ENCODE measurements at regions of chr1 and their contacts with region 1.

Region 1: GRCh38 chr1:156838981-156839410 is 19.9 kb downstream of the INSRR start:
- DNase-seq: peak in 8 of 9 experiments; percentile 33 to 72 (median 54)
- ATAC-seq: peak; percentile 88
- H3K4me3 ChIP-seq: no peak overlapping the region
- H3K4me3 Mint-ChIP-seq: no peak overlapping the region
- H3K27ac ChIP-seq: no peak overlapping the region
- H3K27ac Mint-ChIP-seq: no peak overlapping the region
- H3K4me1 ChIP-seq: no peaks in the 10 kb centered on the region
- H3K4me1 Mint-ChIP-seq: peaks cover 2% of the 10 kb centered on the region
- H3K27me3 ChIP-seq: peaks cover 0 to 7% of the 10 kb centered on the region in 2 experiments
- H3K27me3 Mint-ChIP-seq: peaks cover 46% of the 10 kb centered on the region
- CTCF ChIP-seq: peak; percentile 88

Region 2: GRCh38 chr1:156797212-156797871 is 41.7 kb before region 1 on chr1:
- CTCF ChIA-PET with region 1: interaction called, 29 read pairs
- POLR2A ChIA-PET with region 1: interaction called, 4 read pairs
- intact Hi-C with region 1: loop called (anchors 1 to 5 kb)
- DNase-seq: peak in 7 of 9 experiments; percentile 48 to 84 (median 68)
- ATAC-seq: peak; percentile 91
- H3K4me3 ChIP-seq: no peak overlapping the region
- H3K4me3 Mint-ChIP-seq: no peak overlapping the region
- H3K27ac ChIP-seq: no peak overlapping the region
- H3K27ac Mint-ChIP-seq: no peak overlapping the region
- H3K4me1 ChIP-seq: no peaks in the 10 kb centered on the region
- H3K4me1 Mint-ChIP-seq: peaks cover 8% of the 10 kb centered on the region
- H3K27me3 ChIP-seq: no peaks in the 10 kb centered on the region
- H3K27me3 Mint-ChIP-seq: no peaks in the 10 kb centered on the region
- CTCF ChIP-seq: peak; percentile 87

Region 3: DNA sequence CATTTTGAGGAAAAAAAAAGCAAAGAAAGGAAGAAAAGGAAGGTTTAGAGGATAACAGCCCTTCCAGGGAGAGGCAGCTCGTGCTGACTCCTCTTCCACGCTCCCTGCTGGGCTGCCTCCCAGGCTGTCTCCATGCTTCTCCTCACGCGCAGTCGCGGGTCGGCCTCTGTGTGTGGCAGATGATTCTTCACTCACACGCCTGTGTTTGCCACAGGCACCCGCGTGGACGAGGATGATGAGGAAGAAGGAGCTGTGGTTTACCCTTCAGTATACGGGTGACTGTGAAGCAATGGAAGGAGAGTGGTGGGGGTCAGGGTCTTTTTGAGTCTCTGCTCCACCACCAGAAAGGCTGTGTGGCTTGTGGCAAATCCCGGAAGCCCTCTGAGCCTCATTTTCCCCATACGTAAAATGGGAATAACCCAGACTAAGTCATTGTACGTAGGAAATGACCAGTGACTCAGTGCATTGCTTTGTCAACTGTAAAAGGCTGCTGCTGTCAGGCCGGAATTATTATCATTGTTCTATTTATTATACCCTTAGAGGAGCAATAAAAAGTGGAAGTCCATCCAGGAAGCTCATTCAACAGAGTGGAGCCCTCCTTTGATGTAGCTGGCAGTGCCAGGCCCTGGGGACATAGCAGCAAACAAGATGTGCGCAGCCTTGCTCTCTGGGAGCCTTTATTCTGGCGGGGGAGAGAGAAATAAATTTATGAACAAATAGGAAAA is 10.4 kb before region 1 on chr1:
- CTCF ChIA-PET with region 1: interaction called, 28 read pairs
- POLR2A ChIA-PET with region 1: no interaction called
- intact Hi-C with region 1: no loop called
- DNase-seq: no peak
- ATAC-seq: no peak
- H3K4me3 ChIP-seq: no peak overlapping the region
- H3K4me3 Mint-ChIP-seq: no peak overlapping the region
- H3K27ac ChIP-seq: no peak overlapping the region
- H3K27ac Mint-ChIP-seq: no peak overlapping the region
- H3K4me1 ChIP-seq: no peaks in the 10 kb centered on the region
- H3K4me1 Mint-ChIP-seq: peaks cover under 1% of the 10 kb centered on the region
- H3K27me3 ChIP-seq: no peaks in the 10 kb centered on the region
- H3K27me3 Mint-ChIP-seq: no peaks in the 10 kb centered on the region
- CTCF ChIP-seq: no peak

Region 4: DNA sequence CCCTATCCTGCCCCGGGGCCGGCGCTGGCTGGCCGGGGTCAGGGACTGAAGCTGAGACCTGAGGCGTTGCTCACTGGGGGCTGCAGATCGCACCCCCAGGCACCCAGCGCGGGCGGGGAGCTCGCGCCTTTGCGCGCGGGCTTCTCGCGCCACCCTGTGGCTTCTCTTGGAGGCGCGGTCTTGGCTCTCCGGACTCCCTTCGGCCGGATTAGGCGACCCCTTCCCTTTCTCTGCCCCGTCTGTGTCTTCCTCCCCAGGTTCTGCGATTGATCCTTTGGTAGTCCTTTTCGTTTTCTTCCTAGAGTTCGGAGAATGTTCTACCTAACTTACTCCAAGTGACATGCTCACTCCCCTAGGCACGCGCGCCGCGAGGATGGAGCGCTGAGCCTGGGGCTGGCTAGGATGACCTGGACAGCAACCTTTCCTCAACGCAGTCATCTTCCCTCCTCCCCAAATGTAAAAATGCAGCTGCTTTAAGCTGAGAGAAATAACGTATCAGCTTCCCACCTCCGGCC is 21.2 kb after region 1 on chr1:
- CTCF ChIA-PET with region 1: interaction called, 227 read pairs
- POLR2A ChIA-PET with region 1: interaction called, 16 read pairs
- intact Hi-C with region 1: loop called (anchors 1 kb)
- DNase-seq: peak in 8 of 9 experiments; percentile 47 to 78 (median 63)
- ATAC-seq: peak; percentile 70
- H3K4me3 ChIP-seq: peak overlapping the region; percentile 54 to 73
- H3K4me3 Mint-ChIP-seq: peak overlapping the region; percentile 77
- H3K27ac ChIP-seq: no peak overlapping the region
- H3K27ac Mint-ChIP-seq: peak overlapping the region; percentile 14
- H3K4me1 ChIP-seq: peaks cover 27% of the 10 kb centered on the region
- H3K4me1 Mint-ChIP-seq: peaks cover 25% of the 10 kb centered on the region
- H3K27me3 ChIP-seq: peaks cover 42 to 44% of the 10 kb centered on the region in 2 experiments
- H3K27me3 Mint-ChIP-seq: peaks cover 51% of the 10 kb centered on the region
- CTCF ChIP-seq: peak; percentile 79

Region 5: DNA sequence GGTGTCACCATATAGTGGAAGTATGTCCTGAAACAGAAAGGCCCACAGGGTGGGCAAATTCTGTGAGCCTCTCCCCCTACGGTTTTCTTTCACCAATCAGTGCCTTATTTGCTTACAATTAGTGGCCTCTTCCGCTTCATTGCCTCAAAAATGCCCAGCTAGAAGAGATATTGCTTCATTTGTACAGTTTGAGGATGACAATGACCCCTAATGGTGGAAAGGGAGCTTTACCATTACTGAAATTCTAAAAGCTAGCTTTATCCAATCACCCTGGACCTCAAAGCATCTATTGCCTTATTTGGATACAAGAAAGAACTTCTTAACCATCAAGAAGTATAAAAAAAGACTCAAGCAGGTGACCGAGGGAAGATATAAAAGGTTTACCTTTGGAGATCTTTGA is 131.0 kb after region 1 on chr1:
- CTCF ChIA-PET with region 1: interaction called, 3 read pairs
- POLR2A ChIA-PET with region 1: no interaction called
- intact Hi-C with region 1: loop called in 1 of 2 experiments (anchors 1 kb)
- DNase-seq: peak in 2 of 9 experiments; percentile 10 to 15
- ATAC-seq: no peak
- H3K4me3 ChIP-seq: no peak overlapping the region
- H3K4me3 Mint-ChIP-seq: no peak overlapping the region
- H3K27ac ChIP-seq: no peak overlapping the region
- H3K27ac Mint-ChIP-seq: no peak overlapping the region
- H3K4me1 ChIP-seq: no peaks in the 10 kb centered on the region
- H3K4me1 Mint-ChIP-seq: no peaks in the 10 kb centered on the region
- H3K27me3 ChIP-seq: peaks cover 0 to 2% of the 10 kb centered on the region in 2 experiments
- H3K27me3 Mint-ChIP-seq: peaks cover 8% of the 10 kb centered on the region
- CTCF ChIP-seq: peak; percentile 18

Region 6: DNA sequence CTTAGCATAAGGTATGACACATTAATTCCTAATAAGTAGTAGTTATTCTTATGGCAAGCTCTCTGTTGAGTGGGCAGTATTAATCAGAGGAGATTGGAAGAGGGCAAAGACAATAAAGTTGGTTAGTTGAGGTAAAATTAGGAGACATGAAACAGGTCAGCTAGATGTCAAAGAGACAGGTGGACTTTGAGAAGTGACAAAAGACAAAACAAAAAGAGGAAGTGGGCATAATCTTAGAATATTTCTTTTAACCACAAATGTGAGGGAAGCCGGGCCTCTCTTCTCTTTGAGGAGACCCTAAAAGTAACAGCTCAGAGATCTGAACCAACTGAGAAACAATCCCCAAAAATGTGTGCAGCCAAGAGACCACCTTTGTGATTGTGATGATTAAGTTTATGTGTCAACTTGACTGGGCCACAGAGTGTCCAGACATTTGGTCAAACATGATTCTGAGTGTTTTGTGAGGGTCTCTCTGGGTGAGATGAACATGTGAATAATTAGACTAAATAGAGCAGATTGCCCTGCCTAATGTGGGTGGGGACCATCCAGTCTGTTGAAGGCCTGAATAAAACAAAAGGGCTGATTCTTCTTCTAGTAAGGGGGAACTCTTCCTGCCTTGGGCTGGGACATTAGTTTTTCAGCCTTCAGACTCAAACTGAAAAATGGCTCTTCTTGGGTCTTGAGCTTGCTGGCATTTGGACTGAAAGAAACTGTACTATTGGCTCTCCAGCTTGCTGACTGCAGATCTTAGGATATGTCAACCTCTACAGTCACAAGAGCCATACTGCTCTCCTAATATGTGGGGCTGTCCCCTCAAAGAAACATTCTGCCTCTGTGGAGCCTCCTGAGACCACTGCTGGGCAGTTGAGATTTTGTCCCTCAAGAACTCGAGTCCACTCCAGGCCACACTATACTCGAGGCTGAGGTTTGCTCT is 673.3 kb after region 1 on chr1:
- CTCF ChIA-PET with region 1: no interaction called
- POLR2A ChIA-PET with region 1: no interaction called
- intact Hi-C with region 1: no loop called
- DNase-seq: no peak
- ATAC-seq: no peak
- H3K4me3 ChIP-seq: no peak overlapping the region
- H3K4me3 Mint-ChIP-seq: no peak overlapping the region
- H3K27ac ChIP-seq: no peak overlapping the region
- H3K27ac Mint-ChIP-seq: no peak overlapping the region
- H3K4me1 ChIP-seq: no peaks in the 10 kb centered on the region
- H3K4me1 Mint-ChIP-seq: peaks cover 3% of the 10 kb centered on the region
- H3K27me3 ChIP-seq: no peaks in the 10 kb centered on the region
- H3K27me3 Mint-ChIP-seq: no peaks in the 10 kb centered on the region
- CTCF ChIP-seq: no peak

Measured in CD8-positive, alpha-beta T cell (primary cell).